Dorsolateral prefrontal cortex (tissue), 120 donors: ENCODE measurements at regions of chr10 and their contacts with region 1.

Region 1: DNA sequence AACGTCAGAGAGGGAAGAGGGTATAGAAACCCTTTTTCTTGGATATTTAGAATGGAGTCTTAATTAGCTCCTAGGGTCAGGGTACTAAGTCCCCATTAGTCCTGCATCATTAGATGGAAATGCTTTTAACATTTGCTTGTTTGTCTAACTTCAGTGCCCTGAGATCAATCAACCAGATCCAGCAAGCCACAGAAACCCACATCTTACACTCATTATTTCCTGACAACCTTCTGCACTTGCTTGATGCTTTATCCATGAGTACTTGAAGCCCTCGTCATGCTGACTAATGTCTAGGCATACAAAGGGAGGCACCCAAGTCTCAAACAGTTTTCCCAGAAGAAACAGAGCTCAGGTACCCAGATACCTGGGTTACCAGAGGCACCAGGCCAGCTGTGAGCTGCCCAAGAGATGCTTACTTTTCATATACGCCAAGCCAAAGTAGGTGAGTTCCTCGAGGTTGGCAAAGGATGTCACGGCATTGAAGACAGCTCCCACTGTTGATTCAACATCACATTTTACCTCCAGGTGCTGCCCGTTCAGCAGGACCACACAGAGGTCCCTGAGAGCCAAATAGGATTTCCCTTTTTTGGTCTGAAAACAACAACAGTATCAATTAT is 42.7 kb downstream of the FRMPD2 start:
- DNase-seq: no peak
- H3K4me3 ChIP-seq: no peak overlapping the region
- H3K27ac ChIP-seq: no peak overlapping the region
- H3K27me3 ChIP-seq: no peaks in the 10 kb centered on the region
- CTCF ChIP-seq: no peak

Region 2: DNA sequence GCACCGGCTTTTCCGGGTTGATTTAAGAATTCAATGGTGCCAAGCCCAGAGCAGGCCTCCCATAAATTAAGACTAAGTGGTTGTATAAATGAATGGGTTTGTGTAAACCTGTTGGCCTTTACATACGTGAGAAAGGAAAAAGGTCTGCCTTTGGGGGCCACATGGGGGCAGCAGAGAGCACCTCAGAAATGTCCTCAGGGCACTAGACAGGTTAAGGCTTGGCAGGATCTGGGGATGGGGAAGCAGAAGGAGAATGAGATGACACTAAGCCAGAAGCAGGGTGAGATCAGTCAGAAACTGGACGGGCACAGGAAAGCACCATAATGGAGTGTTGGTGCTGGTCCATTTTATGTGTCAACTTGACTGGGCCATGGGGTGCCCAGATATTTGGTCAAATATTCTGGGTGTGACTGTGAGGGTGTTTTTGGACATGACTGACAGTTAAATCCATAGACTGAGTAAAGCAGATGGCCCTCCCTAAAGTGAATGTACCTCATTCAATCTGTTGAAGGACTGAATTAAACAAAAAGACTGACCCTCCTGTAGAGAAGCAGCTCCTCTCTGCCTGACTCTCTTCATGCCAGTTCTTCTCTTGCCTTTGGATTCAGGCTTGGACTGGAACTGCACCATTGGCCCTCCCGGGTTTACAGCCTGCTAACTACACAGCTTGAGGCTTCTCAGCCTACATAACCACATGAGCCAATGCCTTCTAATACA is 16.2 kb before region 1 on chr10:
- intact Hi-C with region 1: loop called in 1 of 2 experiments (anchors 2 kb)
- DNase-seq: peak in 1 of 10 donors; percentile 37
- H3K4me3 ChIP-seq: no peak overlapping the region
- H3K27ac ChIP-seq: no peak overlapping the region
- H3K27me3 ChIP-seq: no peaks in the 10 kb centered on the region
- CTCF ChIP-seq: peak in 54 of 56 donors; percentile 21 to 68 (median 54)

Region 3: GRCh38 chr10:48289501-48290238 is 57.9 kb after region 1 on chr10:
- intact Hi-C with region 1: loop called in 1 of 2 experiments (anchors 5 kb)
- DNase-seq: peak in 9 of 10 donors; percentile 59 to 79 (median 65)
- H3K4me3 ChIP-seq: no peak overlapping the region
- H3K27ac ChIP-seq: no peak overlapping the region
- H3K27me3 ChIP-seq: no peaks in the 10 kb centered on the region
- CTCF ChIP-seq: peak; percentile 51 to 96 (median 89)